Mammary epithelial cell (primary cell): ENCODE measurements at regions of chr6 and their contacts with region 1.

Region 1: GRCh38 chr6:3742426-3743344 is 8.8 kb downstream of the PXDC1 start:
- DNase-seq: peak; percentile 74
- H3K4me3 ChIP-seq: no peak overlapping the region
- H3K27ac ChIP-seq: peak overlapping the region; percentile 13
- H3K4me1 ChIP-seq: peaks cover 23% of the 10 kb centered on the region
- H3K27me3 ChIP-seq: no peaks in the 10 kb centered on the region
- CTCF ChIP-seq: peak; percentile 82 to 90

Region 2: DNA sequence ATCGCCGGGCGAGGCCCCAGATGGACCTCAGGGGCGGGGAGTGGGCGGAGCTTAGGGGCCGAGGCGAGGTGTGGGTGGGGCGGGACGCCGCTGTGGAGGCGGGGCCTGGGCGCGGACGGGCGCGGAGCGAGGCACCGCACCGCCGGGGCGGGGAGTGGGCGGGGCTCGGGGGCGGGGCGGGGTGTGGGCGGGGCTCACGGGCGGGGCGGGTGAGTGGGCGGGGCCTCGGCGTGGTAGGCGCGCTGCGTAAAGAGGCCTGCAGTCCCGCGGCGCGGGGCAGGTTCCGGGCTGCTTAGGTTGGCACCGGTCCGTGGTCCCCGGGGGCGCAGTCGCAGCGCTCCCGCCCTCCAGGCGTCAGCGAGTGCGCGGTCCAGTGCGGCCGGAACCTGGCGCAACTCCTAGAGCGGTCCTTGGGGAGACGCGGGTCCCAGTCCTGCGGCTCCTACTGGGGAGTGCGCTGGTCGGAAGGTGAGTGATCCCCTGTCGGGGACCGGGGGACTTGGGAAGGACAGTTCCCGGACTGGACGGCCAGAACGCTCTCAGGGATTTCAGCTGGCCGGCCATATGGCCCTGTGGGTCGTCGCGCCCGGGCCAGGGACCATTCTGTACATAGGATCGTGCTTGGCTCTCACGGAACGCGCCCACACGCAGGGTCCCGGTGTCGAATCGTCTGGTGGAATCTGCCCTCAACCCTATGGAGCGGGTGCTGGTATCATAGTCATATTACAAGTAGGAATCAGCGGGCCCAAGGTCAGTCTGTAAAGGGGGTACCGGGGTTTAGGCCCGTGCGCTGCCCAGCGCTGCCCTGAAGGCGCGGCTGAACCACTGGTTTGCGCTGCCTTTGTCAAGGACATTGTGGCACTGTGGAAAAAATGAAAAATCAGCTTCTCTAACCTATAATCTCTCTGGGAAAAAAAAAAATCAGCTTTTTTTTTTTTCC is 742.8 kb before region 1 on chr6 and contains the start of gene NQO2:
- CTCF ChIA-PET with region 1: no interaction called
- dilution Hi-C with region 1: no loop called
- in situ Hi-C with region 1: no loop called
- intact Hi-C with region 1: loop called (anchors 5 kb)
- DNase-seq: no peak
- H3K4me3 ChIP-seq: peak within 1 kb of the TSS; percentile 62 to 94 (median 80)
- H3K27ac ChIP-seq: peak within 1 kb of the TSS; percentile 47
- H3K4me1 ChIP-seq: peaks cover 22% of the 10 kb centered on the region
- H3K27me3 ChIP-seq: no peaks in the 10 kb centered on the region
- CTCF ChIP-seq: peak in 1 of 2 donors; percentile 6
- total RNA-seq, gene NQO2: 17.0 to 20.3 TPM

Region 3: DNA sequence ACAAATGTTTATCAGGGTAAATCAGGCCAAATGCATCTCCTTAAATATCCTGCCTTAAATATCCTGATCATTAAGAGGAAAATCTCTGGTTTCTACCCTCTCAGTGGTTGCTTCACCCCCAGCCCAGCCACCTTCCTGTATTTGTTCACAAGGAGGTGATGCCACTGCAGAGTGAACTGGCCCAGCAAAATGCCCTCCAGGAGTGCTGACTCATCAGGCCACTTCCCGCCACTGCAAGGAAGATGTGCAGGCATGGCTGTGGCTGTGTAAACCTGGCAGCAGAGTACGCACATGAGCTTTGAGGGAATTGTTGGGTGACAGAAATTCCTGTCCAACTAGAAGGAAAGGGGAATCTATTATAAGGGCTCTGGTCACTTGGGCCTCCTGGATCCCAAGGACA is 729.2 kb before region 1 on chr6:
- CTCF ChIA-PET with region 1: no interaction called
- dilution Hi-C with region 1: no loop called
- in situ Hi-C with region 1: no loop called
- intact Hi-C with region 1: no loop called
- DNase-seq: peak; percentile 83
- H3K4me3 ChIP-seq: no peak overlapping the region
- H3K27ac ChIP-seq: no peak overlapping the region
- H3K4me1 ChIP-seq: peaks cover 13% of the 10 kb centered on the region
- H3K27me3 ChIP-seq: no peaks in the 10 kb centered on the region
- CTCF ChIP-seq: no peak

Region 4: GRCh38 chr6:3721810-3722626 is 20.7 kb before region 1 on chr6:
- CTCF ChIA-PET with region 1: no interaction called
- dilution Hi-C with region 1: no loop called
- in situ Hi-C with region 1: no loop called
- intact Hi-C with region 1: no loop called
- DNase-seq: no peak
- H3K4me3 ChIP-seq: no peak overlapping the region
- H3K27ac ChIP-seq: no peak overlapping the region
- H3K4me1 ChIP-seq: no peaks in the 10 kb centered on the region
- H3K27me3 ChIP-seq: no peaks in the 10 kb centered on the region
- CTCF ChIP-seq: no peak

Region 5: GRCh38 chr6:3825851-3826581 is 83.3 kb after region 1 on chr6:
- CTCF ChIA-PET with region 1: no interaction called
- dilution Hi-C with region 1: no loop called
- in situ Hi-C with region 1: loop called in 1 of 2 experiments (anchors 5 kb)
- intact Hi-C with region 1: loop called (anchors 1 kb)
- DNase-seq: peak; percentile 95
- H3K4me3 ChIP-seq: peak overlapping the region in 1 of 3 experiments; percentile 11
- H3K27ac ChIP-seq: peak overlapping the region; percentile 91
- H3K4me1 ChIP-seq: peaks cover 61% of the 10 kb centered on the region
- H3K27me3 ChIP-seq: no peaks in the 10 kb centered on the region
- CTCF ChIP-seq: no peak

Region 6: GRCh38 chr6:3887150-3887700 is 144.5 kb after region 1 on chr6:
- CTCF ChIA-PET with region 1: no interaction called
- dilution Hi-C with region 1: no loop called
- in situ Hi-C with region 1: no loop called
- intact Hi-C with region 1: loop called (anchors 1 kb)
- DNase-seq: no peak
- H3K4me3 ChIP-seq: no peak overlapping the region
- H3K27ac ChIP-seq: no peak overlapping the region
- H3K4me1 ChIP-seq: peaks cover 11% of the 10 kb centered on the region
- H3K27me3 ChIP-seq: no peaks in the 10 kb centered on the region
- CTCF ChIP-seq: peak; percentile 38 to 61

Region 7: DNA sequence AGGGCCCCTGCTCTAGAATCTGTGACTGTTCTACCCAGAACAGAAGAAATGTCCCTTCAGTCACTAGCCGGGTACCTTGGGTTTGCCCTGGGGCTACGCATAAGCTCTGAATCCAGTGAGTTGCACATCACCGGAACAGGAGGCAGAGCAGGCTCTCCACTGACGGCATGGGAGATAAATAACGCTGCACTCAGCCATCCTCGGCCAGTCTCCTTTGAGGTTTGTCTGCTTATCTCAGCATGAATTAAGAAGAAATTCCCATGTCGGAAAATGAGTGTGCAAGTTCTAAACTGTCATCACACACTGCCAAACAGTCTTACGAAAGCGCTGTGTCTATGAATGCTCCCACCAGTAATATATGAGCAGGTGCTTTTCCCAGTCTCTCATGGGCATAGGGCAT is 197.3 kb after region 1 on chr6:
- CTCF ChIA-PET with region 1: no interaction called
- dilution Hi-C with region 1: no loop called
- in situ Hi-C with region 1: loop called in 1 of 2 experiments (anchors 10 kb)
- intact Hi-C with region 1: no loop called
- DNase-seq: no peak
- H3K4me3 ChIP-seq: no peak overlapping the region
- H3K27ac ChIP-seq: no peak overlapping the region
- H3K4me1 ChIP-seq: no peaks in the 10 kb centered on the region
- H3K27me3 ChIP-seq: no peaks in the 10 kb centered on the region
- CTCF ChIP-seq: no peak

Region 8: GRCh38 chr6:3990692-3991501 is 248.2 kb after region 1 on chr6:
- CTCF ChIA-PET with region 1: no interaction called
- dilution Hi-C with region 1: no loop called
- in situ Hi-C with region 1: loop called in 1 of 2 experiments (anchors 5 kb)
- intact Hi-C with region 1: loop called (anchors 1 kb)
- DNase-seq: peak; percentile 77
- H3K4me3 ChIP-seq: peak overlapping the region; percentile 27 to 42 (median 41)
- H3K27ac ChIP-seq: peak overlapping the region; percentile 42
- H3K4me1 ChIP-seq: peaks cover 13% of the 10 kb centered on the region
- H3K27me3 ChIP-seq: no peaks in the 10 kb centered on the region
- CTCF ChIP-seq: peak; percentile 90 to 97

Region 9: DNA sequence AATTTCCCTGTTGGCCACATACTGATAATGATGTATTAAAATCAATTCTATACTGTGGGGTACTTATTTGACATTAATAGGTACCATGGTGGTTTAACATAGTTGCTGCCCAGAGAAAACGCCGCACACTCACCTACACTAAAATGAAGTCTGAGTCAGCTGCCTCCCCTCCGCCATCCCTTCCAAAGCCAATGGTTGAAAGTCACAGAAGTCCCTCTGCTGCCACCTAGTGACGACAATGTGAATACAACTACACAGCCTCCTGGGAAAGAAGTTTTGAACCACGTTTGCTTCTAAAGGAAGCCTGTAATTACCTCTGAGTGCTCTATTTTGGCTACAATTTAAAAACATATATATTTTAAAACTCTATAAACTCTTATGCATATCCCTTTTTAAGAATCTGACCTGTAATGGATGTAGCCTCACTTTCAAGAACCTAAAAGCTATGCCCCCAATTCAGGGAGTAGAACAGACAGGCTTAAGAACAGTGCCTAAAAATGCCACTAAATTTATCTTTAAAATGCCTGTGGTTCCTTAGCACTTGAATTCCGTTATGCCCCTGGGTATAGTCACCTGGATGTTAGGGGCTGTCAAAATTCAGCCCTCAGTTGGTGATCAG is 413.3 kb after region 1 on chr6:
- CTCF ChIA-PET with region 1: no interaction called
- dilution Hi-C with region 1: no loop called
- in situ Hi-C with region 1: no loop called
- intact Hi-C with region 1: loop called (anchors 5 kb)
- DNase-seq: peak; percentile 78
- H3K4me3 ChIP-seq: no peak overlapping the region
- H3K27ac ChIP-seq: no peak overlapping the region
- H3K4me1 ChIP-seq: peaks cover 5% of the 10 kb centered on the region
- H3K27me3 ChIP-seq: no peaks in the 10 kb centered on the region
- CTCF ChIP-seq: peak; percentile 78 to 79